ENCODE measurements at regions of chr14 and their contacts with region 1.

Region 1: GRCh38 chr14:101980251-101981099 is 16.1 kb downstream of the DYNC1H1 start:
- DNase-seq: peak; percentile 21
- H3K4me3 ChIP-seq: no peak overlapping the region
- H3K27ac ChIP-seq: no peak overlapping the region
- H3K4me1 ChIP-seq: no peaks in the 10 kb centered on the region
- H3K27me3 ChIP-seq: no peaks in the 10 kb centered on the region
- CTCF ChIP-seq: no peak

Region 2: DNA sequence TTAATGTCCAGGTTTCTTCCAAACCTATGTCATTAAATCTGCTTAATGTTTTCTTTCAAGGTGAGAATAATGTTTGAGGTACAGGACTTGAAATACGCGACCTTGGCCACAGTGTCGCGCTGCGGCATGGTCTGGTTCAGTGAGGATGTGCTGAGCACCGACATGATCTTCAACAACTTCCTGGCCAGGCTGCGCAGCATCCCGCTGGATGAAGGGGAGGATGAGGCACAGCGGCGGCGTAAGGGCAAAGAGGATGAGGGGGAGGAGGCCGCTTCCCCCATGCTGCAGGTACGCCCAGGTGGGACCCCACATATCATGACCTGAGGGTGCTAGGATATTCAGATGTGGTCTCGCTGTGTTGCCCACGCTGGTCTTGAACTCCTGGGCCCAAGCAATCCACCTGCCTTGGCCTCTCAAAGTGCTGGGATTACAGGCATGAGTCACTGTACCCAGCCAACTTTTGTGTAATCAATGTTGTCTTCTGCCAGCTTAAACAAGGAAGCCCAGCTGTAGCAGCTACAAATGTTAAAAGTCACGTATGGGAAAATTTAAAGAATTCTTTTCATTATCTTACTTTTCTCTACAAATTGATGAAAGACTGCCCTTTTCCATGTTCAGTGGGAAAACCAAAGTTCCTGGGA is 34.7 kb after region 1 on chr14:
- CTCF ChIA-PET with region 1: no interaction called
- POLR2A ChIA-PET with region 1: no interaction called
- intact Hi-C with region 1: loop called (anchors 5 kb)
- DNase-seq: no peak
- H3K4me3 ChIP-seq: no peak overlapping the region
- H3K27ac ChIP-seq: no peak overlapping the region
- H3K4me1 ChIP-seq: no peaks in the 10 kb centered on the region
- H3K27me3 ChIP-seq: no peaks in the 10 kb centered on the region
- CTCF ChIP-seq: no peak

Region 3: DNA sequence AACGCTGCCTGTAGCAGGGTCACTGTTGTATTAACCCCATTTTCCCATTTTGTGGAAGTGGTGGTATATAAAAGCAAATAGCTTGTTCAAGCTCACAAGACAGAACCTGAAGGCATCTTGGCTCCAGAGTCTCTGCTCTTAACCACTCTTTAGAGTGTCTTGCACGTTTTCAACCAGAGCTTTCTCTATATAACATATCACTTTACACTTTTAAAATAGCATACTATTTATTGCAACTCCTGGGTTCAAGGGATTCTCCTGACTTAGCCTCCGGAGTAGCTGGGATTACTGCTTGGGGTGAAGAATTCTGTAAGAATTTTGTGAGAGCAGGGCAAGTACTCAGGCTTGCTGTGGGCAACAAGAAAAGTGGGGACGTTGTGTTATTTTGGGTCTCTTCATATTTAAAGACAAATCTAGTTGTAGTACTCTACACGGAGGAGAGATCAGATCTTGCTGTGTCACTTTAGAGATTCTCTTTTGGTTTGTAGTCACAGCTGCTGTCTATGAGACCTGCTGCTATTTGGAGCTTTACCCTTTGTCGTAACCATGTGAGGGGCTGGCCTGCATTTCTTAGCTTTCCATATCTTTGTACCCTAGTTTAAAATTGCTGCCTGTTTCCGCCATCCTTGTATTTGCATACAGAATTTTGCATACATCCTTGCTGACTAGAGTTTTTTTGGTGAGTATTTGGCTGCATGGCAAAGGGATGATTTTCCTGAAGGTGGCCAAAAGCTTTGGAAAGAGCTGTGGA is 199.9 kb after region 1 on chr14:
- CTCF ChIA-PET with region 1: no interaction called
- POLR2A ChIA-PET with region 1: no interaction called
- intact Hi-C with region 1: no loop called
- DNase-seq: no peak
- H3K4me3 ChIP-seq: no peak overlapping the region
- H3K27ac ChIP-seq: no peak overlapping the region
- H3K4me1 ChIP-seq: peaks cover 38% of the 10 kb centered on the region
- H3K27me3 ChIP-seq: no peaks in the 10 kb centered on the region
- CTCF ChIP-seq: no peak